T-cell (primary cell): ENCODE measurements at regions of chr6 and their contacts with region 1.

Region 1: GRCh38 chr6:147170269-147170668 is 33.9 kb upstream of the STXBP5 start:
- DNase-seq: no peak
- ATAC-seq: no peak
- H3K4me3 ChIP-seq: no peak overlapping the region
- H3K4me3 Mint-ChIP-seq: no peak overlapping the region
- H3K27ac ChIP-seq: no peak overlapping the region
- H3K27ac Mint-ChIP-seq: no peak overlapping the region
- H3K4me1 ChIP-seq: no peaks in the 10 kb centered on the region
- H3K4me1 Mint-ChIP-seq: peaks cover 0 to 2% (median 0%) of the 10 kb centered on the region in 3 donors
- H3K27me3 ChIP-seq: no peaks in the 10 kb centered on the region
- H3K27me3 Mint-ChIP-seq: no peaks in the 10 kb centered on the region

Region 2: DNA sequence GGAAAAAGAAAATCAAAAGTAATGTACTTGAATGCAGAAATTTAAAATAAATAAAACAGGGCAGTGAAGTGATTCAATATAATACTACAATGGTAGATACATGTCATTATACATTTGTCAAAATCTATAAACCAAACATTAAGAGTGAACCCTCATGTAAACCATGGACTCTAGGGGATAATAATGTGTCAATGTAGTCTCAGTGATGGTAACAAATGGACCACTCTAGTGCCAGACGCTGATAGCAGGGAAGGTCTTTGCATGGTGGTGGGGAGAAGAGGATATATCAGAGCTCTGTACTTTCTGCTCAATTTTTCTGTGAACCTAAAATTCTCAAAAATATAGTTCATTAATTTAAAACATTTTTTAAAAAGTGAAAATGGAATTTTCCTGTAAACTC is 14.1 kb after region 1 on chr6:
- CTCF ChIA-PET with region 1: interaction called in 1 of 2 experiments, 12 read pairs
- POLR2A ChIA-PET with region 1: interaction called in 1 of 2 experiments, 11 read pairs
- DNase-seq: no peak
- ATAC-seq: no peak
- H3K4me3 ChIP-seq: no peak overlapping the region
- H3K4me3 Mint-ChIP-seq: no peak overlapping the region
- H3K27ac ChIP-seq: no peak overlapping the region
- H3K27ac Mint-ChIP-seq: no peak overlapping the region
- H3K4me1 ChIP-seq: no peaks in the 10 kb centered on the region
- H3K4me1 Mint-ChIP-seq: no peaks in the 10 kb centered on the region
- H3K27me3 ChIP-seq: no peaks in the 10 kb centered on the region
- H3K27me3 Mint-ChIP-seq: peaks cover 3 to 8% of the 10 kb centered on the region in 2 donors

Region 3: GRCh38 chr6:147190556-147190955 is 20.3 kb after region 1 on chr6:
- CTCF ChIA-PET with region 1: no interaction called
- POLR2A ChIA-PET with region 1: interaction called in 1 of 2 experiments, 11 read pairs
- DNase-seq: no peak
- ATAC-seq: no peak
- H3K4me3 ChIP-seq: no peak overlapping the region
- H3K4me3 Mint-ChIP-seq: no peak overlapping the region
- H3K27ac ChIP-seq: no peak overlapping the region
- H3K27ac Mint-ChIP-seq: no peak overlapping the region
- H3K4me1 ChIP-seq: peaks cover 0 to 3% of the 10 kb centered on the region in 2 experiments
- H3K4me1 Mint-ChIP-seq: peaks cover 8 to 11% (median 10%) of the 10 kb centered on the region in 3 donors
- H3K27me3 ChIP-seq: no peaks in the 10 kb centered on the region
- H3K27me3 Mint-ChIP-seq: peaks cover 3% of the 10 kb centered on the region in 2 donors

Region 4: GRCh38 chr6:147238164-147238563 is 67.9 kb after region 1 on chr6:
- CTCF ChIA-PET with region 1: no interaction called
- POLR2A ChIA-PET with region 1: no interaction called
- DNase-seq: no peak
- ATAC-seq: no peak
- H3K4me3 ChIP-seq: no peak overlapping the region
- H3K4me3 Mint-ChIP-seq: no peak overlapping the region
- H3K27ac ChIP-seq: no peak overlapping the region
- H3K27ac Mint-ChIP-seq: no peak overlapping the region
- H3K4me1 ChIP-seq: no peaks in the 10 kb centered on the region
- H3K4me1 Mint-ChIP-seq: peaks cover 0 to 11% (median 3%) of the 10 kb centered on the region in 3 donors
- H3K27me3 ChIP-seq: no peaks in the 10 kb centered on the region
- H3K27me3 Mint-ChIP-seq: no peaks in the 10 kb centered on the region